Activated CD4-positive, alpha-beta T cell treated with anti-CD3 and anti-CD28 coated beads for 36 hours (primary cell): ENCODE measurements at regions of chr3 and their contacts with region 1.

Region 1: GRCh38 chr3:141441381-141442364 is 45.2 kb upstream of the RASA2 start:
- DNase-seq: peak; percentile 87
- ATAC-seq: peak; percentile 98
- H3K4me3 Mint-ChIP-seq: no peak overlapping the region
- H3K27ac Mint-ChIP-seq: peak overlapping the region; percentile 76
- H3K4me1 Mint-ChIP-seq: peaks cover 25% of the 10 kb centered on the region
- H3K27me3 Mint-ChIP-seq: no peaks in the 10 kb centered on the region

Region 2: GRCh38 chr3:140842984-140843649 is 598.6 kb before region 1 on chr3:
- CTCF ChIA-PET with region 1: no interaction called
- POLR2A ChIA-PET with region 1: no interaction called
- intact Hi-C with region 1: no loop called
- DNase-seq: no peak
- ATAC-seq: no peak
- H3K4me3 Mint-ChIP-seq: no peak overlapping the region
- H3K27ac Mint-ChIP-seq: no peak overlapping the region
- H3K4me1 Mint-ChIP-seq: peaks cover 12% of the 10 kb centered on the region
- H3K27me3 Mint-ChIP-seq: peaks cover 9% of the 10 kb centered on the region

Region 3: DNA sequence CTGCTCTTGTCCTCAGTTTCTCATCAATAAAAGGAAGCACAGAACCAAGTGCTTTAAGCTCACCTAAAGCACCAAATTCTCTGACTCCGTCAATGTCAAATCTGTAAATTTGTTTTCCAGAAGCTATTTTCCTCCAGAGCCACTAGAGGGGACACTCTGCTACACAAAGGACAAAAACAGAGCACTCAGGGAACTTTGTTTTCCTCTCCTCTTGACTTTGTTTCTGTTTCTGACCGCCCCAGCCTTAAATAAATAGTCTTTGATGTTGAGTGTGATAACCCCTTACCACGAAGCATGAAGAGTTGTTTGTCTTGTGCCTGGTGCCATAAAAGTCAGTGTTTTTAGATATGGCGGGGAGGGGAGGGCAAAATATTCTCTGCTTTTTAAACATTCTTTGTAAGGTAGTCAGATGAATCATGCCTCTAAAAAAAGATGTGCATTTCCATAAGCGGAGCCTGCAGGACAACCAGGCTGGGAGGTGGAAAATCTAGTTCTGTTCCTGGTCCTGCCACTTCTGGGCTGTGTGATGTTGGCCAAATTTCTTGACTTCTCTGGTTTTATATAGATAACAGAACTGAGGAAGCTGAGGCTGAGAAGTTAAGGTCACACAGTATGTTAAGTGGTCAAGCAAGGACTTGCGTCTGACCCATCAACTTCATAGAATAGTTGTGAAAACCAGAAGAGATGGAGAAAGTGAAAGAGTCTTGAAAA is 80.6 kb before region 1 on chr3:
- CTCF ChIA-PET with region 1: interaction called, 43 read pairs
- POLR2A ChIA-PET with region 1: no interaction called
- intact Hi-C with region 1: loop called (anchors 1 to 2 kb)
- DNase-seq: no peak
- ATAC-seq: peak; percentile 87
- H3K4me3 Mint-ChIP-seq: peak overlapping the region; percentile 20
- H3K27ac Mint-ChIP-seq: peak overlapping the region; percentile 55
- H3K4me1 Mint-ChIP-seq: peaks cover 9% of the 10 kb centered on the region
- H3K27me3 Mint-ChIP-seq: no peaks in the 10 kb centered on the region

Region 4: DNA sequence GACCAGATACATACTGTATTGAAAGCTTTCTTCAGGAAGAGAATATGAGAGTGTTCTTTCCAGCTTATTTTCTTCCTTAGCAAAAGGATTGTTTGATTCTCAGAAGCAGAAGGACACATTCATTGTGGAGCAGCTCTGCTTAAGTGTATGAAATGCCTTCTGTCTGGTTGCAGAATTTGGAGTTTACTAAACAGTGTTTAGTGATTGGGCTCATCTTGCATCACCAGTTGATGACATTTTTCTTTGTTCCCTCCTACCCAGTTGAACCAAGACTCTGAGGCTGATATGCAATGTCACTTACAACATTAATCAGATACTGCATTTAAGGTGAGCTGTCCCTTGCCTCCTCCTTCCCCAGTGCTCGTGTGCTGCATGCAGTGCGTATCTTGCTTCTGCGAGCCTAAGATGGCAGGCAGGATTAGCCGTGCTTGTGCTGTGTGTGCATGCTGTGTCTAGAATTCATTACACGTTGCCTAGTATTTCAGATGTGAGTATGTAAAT is 55.0 kb before region 1 on chr3:
- CTCF ChIA-PET with region 1: interaction called, 10 read pairs
- POLR2A ChIA-PET with region 1: no interaction called
- intact Hi-C with region 1: no loop called
- DNase-seq: no peak
- ATAC-seq: peak; percentile 53
- H3K4me3 Mint-ChIP-seq: peak overlapping the region; percentile 20
- H3K27ac Mint-ChIP-seq: no peak overlapping the region
- H3K4me1 Mint-ChIP-seq: peaks cover 13% of the 10 kb centered on the region
- H3K27me3 Mint-ChIP-seq: no peaks in the 10 kb centered on the region

Region 5: DNA sequence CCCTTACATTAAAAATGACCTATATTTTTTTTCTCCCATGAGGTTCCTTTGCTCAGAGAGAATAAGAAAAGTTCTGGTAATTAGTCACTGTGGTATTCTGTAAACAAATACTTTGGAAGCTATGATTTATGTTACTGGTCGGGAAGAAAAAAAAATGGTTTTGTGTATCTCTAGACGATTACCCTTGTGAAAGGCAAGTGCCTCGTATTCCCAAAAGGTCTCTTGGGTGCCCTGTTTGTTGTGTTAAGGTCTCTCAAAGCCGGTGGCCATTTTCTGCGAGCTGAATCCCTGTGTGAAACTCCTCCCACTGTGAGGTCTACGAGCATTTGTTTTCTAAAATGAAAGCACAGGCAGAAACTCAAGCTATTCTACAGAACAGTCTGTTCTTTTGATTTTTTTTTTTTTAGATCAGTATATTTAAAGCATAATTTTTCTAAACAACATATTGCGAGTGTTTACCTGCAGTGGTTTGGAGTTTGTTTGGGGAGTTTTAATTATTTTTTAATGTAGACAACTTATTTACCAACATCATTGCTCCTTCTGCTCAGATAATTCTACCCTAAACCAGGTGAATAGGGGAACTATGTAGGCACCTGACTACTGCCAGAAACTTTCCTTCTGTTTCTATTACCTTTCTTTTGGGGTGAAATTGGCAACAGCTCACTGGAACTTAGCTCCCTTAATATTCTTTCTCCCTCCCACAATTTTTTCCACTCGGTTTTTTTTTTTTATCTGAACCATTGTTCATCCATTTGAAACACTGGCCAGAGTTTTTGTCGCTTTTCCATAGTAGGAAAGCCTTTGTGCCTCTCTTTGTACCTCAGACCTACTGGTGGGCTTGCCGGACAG is 29.4 kb before region 1 on chr3:
- CTCF ChIA-PET with region 1: interaction called, 20 read pairs
- POLR2A ChIA-PET with region 1: interaction called, 3 read pairs
- intact Hi-C with region 1: loop called in 1 of 2 experiments (anchors 2 kb)
- DNase-seq: peak; percentile 71
- ATAC-seq: peak; percentile 24
- H3K4me3 Mint-ChIP-seq: peak overlapping the region; percentile 74
- H3K27ac Mint-ChIP-seq: peak overlapping the region; percentile 99
- H3K4me1 Mint-ChIP-seq: peaks cover 89% of the 10 kb centered on the region
- H3K27me3 Mint-ChIP-seq: no peaks in the 10 kb centered on the region

Region 6: DNA sequence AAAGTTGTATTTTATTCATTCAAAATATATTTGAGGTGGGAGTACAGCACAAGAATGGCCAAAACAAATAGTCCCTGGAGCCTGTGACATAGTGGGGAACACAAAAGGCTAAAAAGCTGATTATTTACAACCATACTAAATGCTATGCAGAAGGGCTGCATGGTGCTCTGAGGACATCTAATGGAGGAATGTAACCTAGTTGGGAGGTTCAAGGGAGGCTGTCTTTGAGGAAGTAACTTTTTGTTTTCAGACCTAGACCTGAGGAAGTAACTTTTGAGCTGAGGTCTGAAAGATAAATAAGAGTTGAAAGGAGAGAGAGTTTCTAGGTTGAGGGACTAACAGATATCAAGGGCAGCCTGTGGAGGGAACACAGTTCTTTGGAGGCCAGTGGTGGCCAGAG is 10.4 kb after region 1 on chr3:
- CTCF ChIA-PET with region 1: interaction called, 38 read pairs
- POLR2A ChIA-PET with region 1: interaction called, 5 read pairs
- intact Hi-C with region 1: no loop called
- DNase-seq: peak; percentile 63
- ATAC-seq: peak; percentile 79
- H3K4me3 Mint-ChIP-seq: no peak overlapping the region
- H3K27ac Mint-ChIP-seq: no peak overlapping the region
- H3K4me1 Mint-ChIP-seq: peaks cover 22% of the 10 kb centered on the region
- H3K27me3 Mint-ChIP-seq: no peaks in the 10 kb centered on the region